HEK293 (cell line): ENCODE measurements at regions of chr19 and their contacts with region 1.

Region 1: GRCh38 chr19:21092109-21092508 is 10.1 kb downstream of the ZNF714 start:
- H3K4me3 ChIP-seq: no peak overlapping the region
- H3K27ac ChIP-seq: no peak overlapping the region
- H3K4me1 ChIP-seq: no peaks in the 10 kb centered on the region
- CTCF ChIP-seq: no peak

Region 2: DNA sequence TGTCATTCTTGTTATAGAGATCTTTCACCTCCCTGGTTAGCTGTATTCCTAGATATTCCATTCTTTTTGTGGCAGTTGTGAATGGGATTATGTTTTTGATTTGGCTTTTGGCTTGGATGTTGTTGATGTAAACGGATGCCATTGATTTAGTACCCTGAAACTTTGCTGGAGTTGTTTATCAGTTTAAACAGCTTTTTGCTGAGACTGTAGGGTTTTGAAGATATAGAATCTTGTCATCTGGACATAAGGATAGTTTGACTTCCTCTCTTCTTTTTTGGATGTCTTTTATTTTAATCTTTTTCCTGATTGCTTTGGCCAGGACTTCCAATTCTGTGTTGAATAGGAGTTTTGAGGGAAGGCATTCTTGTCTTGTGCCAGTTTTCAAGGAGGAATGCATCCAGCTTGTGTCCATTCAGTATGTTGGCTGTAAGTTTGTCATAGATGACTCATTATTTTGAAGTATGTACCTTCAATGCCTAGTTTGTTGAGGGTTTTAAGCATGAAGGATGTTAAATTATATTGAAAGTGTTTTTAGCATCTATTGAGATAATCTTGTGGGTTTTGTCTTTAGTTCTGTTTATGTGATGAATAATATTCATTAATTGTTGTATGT is 66.5 kb after region 1 on chr19:
- CTCF ChIA-PET with region 1: no interaction called
- POLR2A ChIA-PET with region 1: interaction called, 10 read pairs
- H3K4me3 ChIP-seq: no peak overlapping the region
- H3K27ac ChIP-seq: no peak overlapping the region
- H3K4me1 ChIP-seq: no peaks in the 10 kb centered on the region
- CTCF ChIP-seq: no peak